Panc1 (cell line): ENCODE measurements at regions of chr6 and their contacts with region 1.

Region 1: DNA sequence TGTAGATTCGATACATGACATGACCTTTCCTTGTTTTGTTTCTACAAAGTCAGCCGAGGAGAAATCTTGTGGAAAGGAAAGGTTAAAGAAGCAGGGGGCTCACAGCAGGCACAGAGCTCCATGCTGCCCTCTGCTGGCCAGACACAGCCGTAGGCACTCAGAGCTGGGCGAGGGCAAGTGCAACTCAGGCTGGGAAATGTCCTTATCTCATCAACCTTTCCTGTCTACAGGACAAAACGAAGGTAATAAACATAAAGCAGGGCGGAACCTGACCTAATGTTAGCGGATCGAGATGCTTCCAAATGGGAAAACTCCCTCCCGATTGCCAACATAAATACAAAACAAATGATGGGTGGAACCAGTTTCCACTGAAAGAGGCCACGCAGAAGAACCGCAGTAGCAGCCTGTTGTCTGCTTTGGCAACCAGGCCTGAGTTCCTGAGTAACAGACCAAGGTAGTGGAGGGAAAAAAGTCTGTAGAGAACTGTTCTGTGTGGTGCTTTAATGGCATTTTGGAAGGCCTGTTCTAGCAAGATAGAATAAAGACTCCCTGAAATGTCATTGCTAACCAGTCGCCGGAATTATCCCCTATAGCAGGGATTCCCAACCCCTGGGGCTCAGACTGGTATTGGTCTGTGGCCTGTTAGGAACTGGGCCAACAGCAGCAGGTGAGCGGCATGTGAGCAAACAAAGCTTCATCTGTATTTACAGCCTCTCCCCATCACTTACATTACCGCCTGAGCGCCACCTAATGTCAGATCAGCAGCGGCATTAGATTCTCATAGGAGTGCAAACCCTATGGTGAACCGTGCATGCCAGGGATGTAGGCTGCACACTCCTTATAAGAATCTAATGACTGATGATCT is 85.2 kb downstream of the MBOAT1 start:
- DNase-seq: peak; percentile 42
- ATAC-seq: peak; percentile 95
- H3K4me3 ChIP-seq: no peak overlapping the region
- H3K27ac ChIP-seq: no peak overlapping the region
- H3K4me1 ChIP-seq: no peaks in the 10 kb centered on the region
- H3K27me3 ChIP-seq: no peaks in the 10 kb centered on the region
- CTCF ChIP-seq: peak; percentile 98

Region 2: GRCh38 chr6:19945843-19946358 is 181.1 kb before region 1 on chr6:
- CTCF ChIA-PET with region 1: interaction called, 12 read pairs
- POLR2A ChIA-PET with region 1: no interaction called
- in situ Hi-C with region 1: no loop called
- intact Hi-C with region 1: no loop called
- DNase-seq: no peak
- ATAC-seq: no peak
- H3K4me3 ChIP-seq: no peak overlapping the region
- H3K27ac ChIP-seq: no peak overlapping the region
- H3K4me1 ChIP-seq: no peaks in the 10 kb centered on the region
- H3K27me3 ChIP-seq: no peaks in the 10 kb centered on the region
- CTCF ChIP-seq: no peak

Region 3: DNA sequence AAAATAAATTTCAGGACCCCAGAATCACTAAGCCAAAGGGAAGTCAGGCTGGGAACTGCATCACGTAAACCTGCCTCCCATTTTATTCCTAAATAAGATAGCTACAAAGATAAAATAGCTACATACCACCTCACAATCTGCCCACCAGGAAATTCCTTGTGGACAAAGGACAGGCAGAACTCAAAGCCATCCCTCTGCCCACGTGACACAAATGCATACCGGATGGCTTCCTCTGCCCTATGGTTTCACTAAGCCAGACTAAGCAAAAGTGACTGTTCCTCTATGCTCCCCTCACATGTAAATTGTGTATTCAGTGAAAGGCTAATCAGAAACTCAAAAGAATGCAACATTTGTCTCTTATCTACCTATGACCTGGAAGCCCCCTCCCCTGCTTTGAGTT is 70.2 kb after region 1 on chr6:
- CTCF ChIA-PET with region 1: no interaction called
- POLR2A ChIA-PET with region 1: no interaction called
- in situ Hi-C with region 1: no loop called
- intact Hi-C with region 1: no loop called
- DNase-seq: no peak
- ATAC-seq: no peak
- H3K4me3 ChIP-seq: no peak overlapping the region
- H3K27ac ChIP-seq: no peak overlapping the region
- H3K4me1 ChIP-seq: peaks cover 25% of the 10 kb centered on the region
- H3K27me3 ChIP-seq: no peaks in the 10 kb centered on the region
- CTCF ChIP-seq: no peak